ENCODE measurements at regions of chrX and their contacts with region 1.

Region 1: GRCh38 chrX:71998836-71999509 is 88.3 kb downstream of the NHSL2 start:
- DNase-seq: peak; percentile 76
- H3K4me3 ChIP-seq: no peak overlapping the region; a peak in 1 of 4 replicates
- H3K27ac ChIP-seq: no peak overlapping the region
- H3K4me1 ChIP-seq: peaks cover 0 to 3% of the 10 kb centered on the region in 2 experiments; a peak in 1 of 4 replicates
- H3K27me3 ChIP-seq: peaks cover 5% of the 10 kb centered on the region; the same call in 1 of the 2 replicates
- CTCF ChIP-seq: peak; percentile 88
- EP300 ChIP-seq: no peak
- RAD21 ChIP-seq: peak; percentile 81

Region 2: GRCh38 chrX:72011734-72012133 is 12.8 kb after region 1 on chrX:
- CTCF ChIA-PET with region 1: interaction called, 57 read pairs
- POLR2A ChIA-PET with region 1: no interaction called
- DNase-seq: no peak
- H3K4me3 ChIP-seq: no peak overlapping the region
- H3K27ac ChIP-seq: no peak overlapping the region
- H3K4me1 ChIP-seq: no peaks in the 10 kb centered on the region; a peak in 1 of 4 replicates
- H3K27me3 ChIP-seq: peaks cover 38% of the 10 kb centered on the region; the same call in 1 of the 2 replicates
- CTCF ChIP-seq: no peak
- EP300 ChIP-seq: no peak
- RAD21 ChIP-seq: no peak

Region 3: DNA sequence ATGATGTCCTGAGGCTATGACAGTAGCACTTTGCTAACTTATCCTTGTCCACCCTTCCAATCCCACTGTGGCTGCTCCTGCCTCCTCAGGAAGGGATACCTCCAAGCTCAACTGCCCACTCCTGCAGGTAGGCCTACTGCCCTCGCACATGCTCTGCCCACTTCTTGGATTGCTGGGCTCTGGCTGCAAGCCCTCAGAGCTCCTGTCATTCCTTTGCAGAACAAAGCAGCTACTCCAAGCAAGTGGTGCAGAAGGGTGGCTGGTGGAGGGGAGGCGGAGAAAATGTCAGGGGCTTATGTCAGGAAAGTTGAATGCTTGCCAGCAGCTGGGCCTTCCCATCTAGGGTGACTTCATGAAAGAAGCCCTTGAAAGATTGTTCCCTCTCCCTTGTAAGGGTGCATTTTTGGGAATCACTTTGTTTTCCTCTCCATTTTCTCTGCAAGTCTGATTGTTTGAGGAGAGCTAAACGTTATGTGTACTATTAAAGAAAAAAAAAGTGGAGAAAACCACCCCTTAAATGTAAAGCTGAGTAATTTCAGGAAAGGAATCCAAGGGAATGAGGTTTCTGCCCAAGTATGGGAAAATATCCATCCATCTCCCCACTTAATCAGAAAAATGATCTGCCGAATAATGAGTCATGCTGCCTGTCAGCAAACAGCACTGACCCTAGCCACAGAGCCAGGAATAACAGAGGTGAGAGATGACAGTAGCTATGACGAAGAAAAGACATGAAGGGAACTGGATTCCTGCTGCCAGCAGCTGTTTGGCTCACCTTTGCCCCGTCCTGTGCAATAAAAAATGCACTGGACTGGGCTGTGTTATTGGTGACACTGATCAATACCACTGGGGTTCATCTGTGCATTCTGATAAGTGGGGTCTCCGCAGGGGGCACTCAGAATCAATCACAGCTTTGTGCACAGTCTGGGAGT is 30.8 kb after region 1 on chrX:
- CTCF ChIA-PET with region 1: interaction called, 12 read pairs
- POLR2A ChIA-PET with region 1: no interaction called
- DNase-seq: peak; percentile 47
- H3K4me3 ChIP-seq: peak overlapping the region in 1 of 2 experiments; percentile 40; a peak in 1 of 4 replicates
- H3K27ac ChIP-seq: peak overlapping the region; percentile 61 to 78
- H3K4me1 ChIP-seq: peaks cover 18 to 33% of the 10 kb centered on the region in 2 experiments
- H3K27me3 ChIP-seq: 0 out of 2 replicates have a peak, but pooled peaks cover 9% of the 10 kb centered on the region
- CTCF ChIP-seq: no peak
- EP300 ChIP-seq: peak; percentile 57 to 90
- RAD21 ChIP-seq: no peak

Region 4: GRCh38 chrX:72201836-72202536 is 203.0 kb after region 1 on chrX:
- CTCF ChIA-PET with region 1: no interaction called
- POLR2A ChIA-PET with region 1: no interaction called
- DNase-seq: no peak
- H3K4me3 ChIP-seq: peak overlapping the region in 1 of 2 experiments; percentile 34; a peak in 1 of 4 replicates
- H3K27ac ChIP-seq: peak overlapping the region in 1 of 2 experiments; percentile 87; a peak in 3 of 4 replicates
- H3K4me1 ChIP-seq: no peaks in the 10 kb centered on the region
- H3K27me3 ChIP-seq: no peaks in the 10 kb centered on the region
- CTCF ChIP-seq: no peak
- EP300 ChIP-seq: no peak
- RAD21 ChIP-seq: no peak